ENCODE measurements at regions of chr12 and their contacts with region 1.

Region 1: GRCh38 chr12:85029456-85029855 is 6.6 kb downstream of the TSPAN19 start:
- DNase-seq: no peak
- ATAC-seq: peak; percentile 55 to 60 (median 58)
- H3K4me3 ChIP-seq: no peak overlapping the region
- H3K27ac ChIP-seq: no peak overlapping the region
- H3K4me1 ChIP-seq: no peaks in the 10 kb centered on the region
- H3K27me3 ChIP-seq: peaks cover 0 to 8% (median 0%) of the 10 kb centered on the region in 4 donors
- CTCF ChIP-seq: peak in 3 of 4 donors; percentile 29 to 47 (median 34)

Region 2: DNA sequence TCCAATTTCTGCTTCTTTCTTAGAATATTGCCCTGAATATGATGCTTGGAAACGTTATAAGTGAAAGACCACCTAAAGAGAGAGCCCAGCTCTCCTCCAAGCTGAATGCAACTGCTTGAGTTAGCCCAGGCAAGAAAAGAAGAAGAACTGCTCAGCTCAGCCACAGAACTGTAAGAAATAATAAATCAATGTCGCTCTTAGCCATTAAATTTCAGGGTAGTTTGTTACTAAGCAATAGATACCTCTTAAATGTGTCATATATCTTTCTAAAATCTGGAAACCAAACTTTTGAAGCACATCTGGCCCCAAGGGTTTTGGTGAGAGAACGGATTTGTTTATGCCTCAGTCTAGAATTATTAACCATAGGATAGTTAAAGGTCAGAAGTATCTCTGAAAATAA is 167.3 kb before region 1 on chr12:
- intact Hi-C with region 1: loop called in 2 of 3 experiments (anchors 5 to 10 kb)
- DNase-seq: no peak
- ATAC-seq: no peak
- H3K4me3 ChIP-seq: no peak overlapping the region
- H3K27ac ChIP-seq: no peak overlapping the region
- H3K4me1 ChIP-seq: no peaks in the 10 kb centered on the region
- H3K27me3 ChIP-seq: no peaks in the 10 kb centered on the region
- CTCF ChIP-seq: no peak

Measured in pancreas (tissue), 10 donors.